Sigmoid colon (tissue), 7 donors: ENCODE measurements at regions of chr7 and their contacts with region 1.

Region 1: GRCh38 chr7:6443351-6443941 is 4.3 kb downstream of the DAGLB start:
- DNase-seq: no peak
- H3K4me3 ChIP-seq: no peak overlapping the region
- H3K27ac ChIP-seq: peak overlapping the region in 1 of 4 donors; percentile 14
- H3K4me1 ChIP-seq: peaks cover 0 to 33% (median 12%) of the 10 kb centered on the region in 4 donors
- H3K27me3 ChIP-seq: no peaks in the 10 kb centered on the region
- CTCF ChIP-seq: no peak
- EP300 ChIP-seq: no peak
- POLR2A ChIP-seq: no peak

Region 2: GRCh38 chr7:6071406-6071805 is 372.0 kb before region 1 on chr7:
- intact Hi-C with region 1: loop called (anchors 5 kb)
- DNase-seq: no peak
- H3K4me3 ChIP-seq: no peak overlapping the region
- H3K27ac ChIP-seq: no peak overlapping the region
- H3K4me1 ChIP-seq: no peaks in the 10 kb centered on the region
- H3K27me3 ChIP-seq: no peaks in the 10 kb centered on the region
- CTCF ChIP-seq: no peak
- EP300 ChIP-seq: no peak
- POLR2A ChIP-seq: no peak

Region 3: GRCh38 chr7:6577365-6578113 is 134.1 kb after region 1 on chr7 and contains the start of gene ZDHHC4:
- intact Hi-C with region 1: no loop called
- DNase-seq: peak; percentile 93
- H3K4me3 ChIP-seq: peak within 1 kb of the TSS; percentile 67 to 77 (median 72)
- H3K27ac ChIP-seq: peak within 1 kb of the TSS; percentile 93 to 97 (median 95)
- H3K4me1 ChIP-seq: peaks cover 0 to 11% (median 6%) of the 10 kb centered on the region in 4 donors
- H3K27me3 ChIP-seq: no peaks in the 10 kb centered on the region
- CTCF ChIP-seq: no peak
- EP300 ChIP-seq: peak in 1 of 4 donors; percentile 6
- POLR2A ChIP-seq: peak; percentile 93 to 94
- total RNA-seq, gene ZDHHC4: 51.0 to 73.6 (median 61.8) TPM